ENCODE measurements at regions of chr7 and their contacts with region 1.

Region 1: DNA sequence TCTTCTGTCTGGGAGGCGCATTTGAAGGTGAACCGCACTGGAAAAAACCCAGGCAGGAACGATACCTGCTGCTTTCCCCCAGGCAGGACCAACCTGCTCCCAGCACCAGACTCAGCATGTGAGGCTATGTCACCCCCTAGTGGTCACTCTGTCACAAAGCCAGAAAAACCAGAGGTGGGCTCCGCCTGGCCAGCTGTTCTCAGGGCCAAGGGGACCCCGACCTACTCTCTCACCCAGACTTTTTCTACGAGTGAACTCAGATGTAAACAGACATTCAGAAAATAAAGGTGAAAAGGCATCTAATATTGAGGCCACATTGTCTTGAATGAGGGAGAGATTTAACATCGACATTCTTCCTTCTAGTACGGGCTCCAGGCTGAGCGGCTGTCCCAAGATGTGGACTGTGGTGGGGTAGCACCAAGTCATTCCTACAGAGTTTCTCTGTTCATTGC is 117.3 kb downstream of the PRKAG2 start:
- DNase-seq: peak; percentile 87
- H3K4me3 Mint-ChIP-seq: no peak overlapping the region
- H3K27ac Mint-ChIP-seq: no peak overlapping the region
- H3K4me1 Mint-ChIP-seq: peaks cover 16% of the 10 kb centered on the region
- H3K27me3 Mint-ChIP-seq: peaks cover 5% of the 10 kb centered on the region

Region 2: GRCh38 chr7:151368136-151368571 is 391.5 kb before region 1 on chr7:
- intact Hi-C with region 1: loop called (anchors 1 kb)
- DNase-seq: peak; percentile 93
- H3K4me3 Mint-ChIP-seq: no peak overlapping the region
- H3K27ac Mint-ChIP-seq: no peak overlapping the region
- H3K4me1 Mint-ChIP-seq: peaks cover 5% of the 10 kb centered on the region
- H3K27me3 Mint-ChIP-seq: no peaks in the 10 kb centered on the region

Region 3: GRCh38 chr7:151570366-151570915 is 189.2 kb before region 1 on chr7:
- intact Hi-C with region 1: loop called (anchors 1 kb)
- DNase-seq: no peak
- H3K4me3 Mint-ChIP-seq: no peak overlapping the region
- H3K27ac Mint-ChIP-seq: no peak overlapping the region
- H3K4me1 Mint-ChIP-seq: no peaks in the 10 kb centered on the region
- H3K27me3 Mint-ChIP-seq: no peaks in the 10 kb centered on the region

Region 4: GRCh38 chr7:151631968-151632749 is 127.5 kb before region 1 on chr7:
- intact Hi-C with region 1: loop called (anchors 5 kb)
- DNase-seq: peak; percentile 97
- H3K4me3 Mint-ChIP-seq: peak overlapping the region; percentile 96
- H3K27ac Mint-ChIP-seq: peak overlapping the region; percentile 99
- H3K4me1 Mint-ChIP-seq: peaks cover 24% of the 10 kb centered on the region
- H3K27me3 Mint-ChIP-seq: peaks cover 2% of the 10 kb centered on the region

Region 5: DNA sequence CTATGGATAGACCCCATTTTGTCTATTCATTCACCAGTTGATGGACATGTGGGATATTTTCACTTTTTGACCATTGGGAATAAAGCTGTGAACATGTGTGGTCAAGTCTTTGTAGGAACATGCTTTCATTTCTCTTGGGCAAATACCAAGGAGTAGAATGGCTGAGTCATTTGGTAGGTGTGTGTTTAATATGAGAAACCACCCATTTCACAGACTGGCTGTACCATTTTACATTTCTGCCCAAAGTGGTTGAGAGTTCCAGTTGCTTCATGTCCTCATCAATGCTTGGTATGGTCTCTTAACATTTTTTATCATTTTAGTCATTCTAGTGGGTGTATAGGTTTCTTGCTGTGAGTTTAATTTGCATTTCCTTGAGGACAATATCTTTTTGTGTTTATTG is 115.1 kb before region 1 on chr7:
- intact Hi-C with region 1: no loop called
- DNase-seq: no peak
- H3K4me3 Mint-ChIP-seq: no peak overlapping the region
- H3K27ac Mint-ChIP-seq: no peak overlapping the region
- H3K4me1 Mint-ChIP-seq: no peaks in the 10 kb centered on the region
- H3K27me3 Mint-ChIP-seq: peaks cover 2% of the 10 kb centered on the region

Region 6: DNA sequence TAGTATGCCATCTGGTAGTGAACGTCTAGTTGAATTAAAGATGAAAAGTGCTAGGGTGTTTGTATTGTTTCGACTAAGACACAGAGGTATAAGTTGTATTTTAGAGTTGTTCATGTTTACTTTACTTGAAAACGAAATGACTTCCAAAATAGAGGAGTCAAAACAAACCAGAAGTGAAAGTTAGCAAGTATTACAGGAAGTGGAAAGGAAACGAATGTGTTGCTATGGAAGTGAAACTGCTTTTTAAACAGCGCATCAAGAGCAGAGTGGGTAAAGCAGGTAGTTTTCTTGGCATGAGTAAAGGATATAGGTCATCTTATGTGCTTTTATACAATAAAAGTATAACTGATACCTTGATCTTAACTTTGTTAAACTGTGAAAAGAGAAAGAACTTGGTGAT is 176.6 kb after region 1 on chr7:
- intact Hi-C with region 1: no loop called
- DNase-seq: peak; percentile 71
- H3K4me3 Mint-ChIP-seq: peak overlapping the region; percentile 72
- H3K27ac Mint-ChIP-seq: peak overlapping the region; percentile 74
- H3K4me1 Mint-ChIP-seq: peaks cover 20% of the 10 kb centered on the region
- H3K27me3 Mint-ChIP-seq: peaks cover 22% of the 10 kb centered on the region

Measured in activated CD4-positive, alpha-beta T cell treated with anti-CD3 and anti-CD28 coated beads, Interleukin-2, amount 10 ng/mL, durations not matched to agents 24 days and 14 days (primary cell).